ENCODE measurements at regions of chr15 and their contacts with region 1.

Region 1: DNA sequence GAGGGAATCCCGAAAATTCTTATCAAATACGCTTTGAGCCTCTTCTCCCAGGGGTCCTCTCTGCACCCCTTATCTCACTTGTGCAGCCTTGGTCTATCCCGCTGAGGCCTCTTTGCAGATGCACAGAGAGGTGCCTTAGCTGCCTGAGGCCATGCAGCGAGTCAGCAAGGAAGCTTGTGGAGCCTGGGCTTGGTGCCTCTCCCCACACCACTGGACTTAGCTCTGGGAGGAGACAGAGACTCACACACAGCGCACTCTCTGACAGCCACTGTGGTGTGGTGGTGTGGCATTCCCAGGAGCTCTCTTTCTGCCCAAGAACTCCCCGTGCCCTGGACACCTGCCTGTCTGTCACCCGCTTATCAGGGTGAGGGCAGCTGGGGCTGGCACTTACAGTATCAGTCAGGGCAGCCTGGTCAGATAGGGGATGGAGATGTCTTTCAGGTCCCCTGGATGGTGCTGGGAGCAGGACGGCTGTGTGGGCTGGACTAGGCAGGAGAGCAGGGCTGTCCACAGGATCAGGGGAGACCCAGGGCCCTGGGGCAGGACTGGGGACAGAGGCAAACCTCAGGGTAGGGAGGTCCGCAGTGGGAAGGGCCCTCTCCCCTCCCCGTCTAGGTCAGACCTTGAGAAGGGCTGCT is 10.2 kb upstream of the LINGO1 start:
- DNase-seq: peak; percentile 44
- ATAC-seq: no peak

Region 2: GRCh38 chr15:77695961-77696582 is 53.2 kb after region 1 on chr15:
- intact Hi-C with region 1: loop called (anchors 10 kb)
- DNase-seq: no peak
- ATAC-seq: no peak

Region 3: GRCh38 chr15:77810130-77810571 is 167.2 kb after region 1 on chr15:
- intact Hi-C with region 1: no loop called
- DNase-seq: no peak
- ATAC-seq: peak; percentile 24